Right lobe of liver (tissue), 6 donors: ENCODE measurements at regions of chr16 and their contacts with region 1.

Region 1: GRCh38 chr16:75110637-75111513 is 5.7 kb downstream of the LDHD start:
- DNase-seq: peak; percentile 86 to 89 (median 88)
- ATAC-seq: peak; percentile 68 to 77 (median 72)
- H3K4me3 ChIP-seq: no peak overlapping the region
- H3K27ac ChIP-seq: peak overlapping the region; percentile 2 to 81 (median 37)
- H3K4me1 ChIP-seq: peaks cover 0 to 56% (median 18%) of the 10 kb centered on the region in 4 donors
- H3K27me3 ChIP-seq: no peaks in the 10 kb centered on the region
- CTCF ChIP-seq: peak; percentile 89 to 92 (median 90)
- POLR2A ChIP-seq: no peak

Region 2: GRCh38 chr16:74998481-74999218 is 112.2 kb before region 1 on chr16 and contains the start of gene ZNRF1:
- intact Hi-C with region 1: loop called (anchors 5 to 10 kb)
- DNase-seq: peak; percentile 88 to 89 (median 88)
- ATAC-seq: peak; percentile 81 to 87 (median 86)
- H3K4me3 ChIP-seq: peak within 1 kb of the TSS; percentile 67 to 79 (median 77)
- H3K27ac ChIP-seq: peak within 1 kb of the TSS; percentile 56 to 74 (median 73)
- H3K4me1 ChIP-seq: peaks cover 0 to 30% (median 4%) of the 10 kb centered on the region in 4 donors
- H3K27me3 ChIP-seq: no peaks in the 10 kb centered on the region
- CTCF ChIP-seq: peak; percentile 69 to 76 (median 72)
- POLR2A ChIP-seq: peak; percentile 51
- total RNA-seq, gene ZNRF1: 10.2 to 18.8 (median 11.1) TPM